Mammary epithelial cell (primary cell): ENCODE measurements at regions of chr15 and their contacts with region 1.

Region 1: DNA sequence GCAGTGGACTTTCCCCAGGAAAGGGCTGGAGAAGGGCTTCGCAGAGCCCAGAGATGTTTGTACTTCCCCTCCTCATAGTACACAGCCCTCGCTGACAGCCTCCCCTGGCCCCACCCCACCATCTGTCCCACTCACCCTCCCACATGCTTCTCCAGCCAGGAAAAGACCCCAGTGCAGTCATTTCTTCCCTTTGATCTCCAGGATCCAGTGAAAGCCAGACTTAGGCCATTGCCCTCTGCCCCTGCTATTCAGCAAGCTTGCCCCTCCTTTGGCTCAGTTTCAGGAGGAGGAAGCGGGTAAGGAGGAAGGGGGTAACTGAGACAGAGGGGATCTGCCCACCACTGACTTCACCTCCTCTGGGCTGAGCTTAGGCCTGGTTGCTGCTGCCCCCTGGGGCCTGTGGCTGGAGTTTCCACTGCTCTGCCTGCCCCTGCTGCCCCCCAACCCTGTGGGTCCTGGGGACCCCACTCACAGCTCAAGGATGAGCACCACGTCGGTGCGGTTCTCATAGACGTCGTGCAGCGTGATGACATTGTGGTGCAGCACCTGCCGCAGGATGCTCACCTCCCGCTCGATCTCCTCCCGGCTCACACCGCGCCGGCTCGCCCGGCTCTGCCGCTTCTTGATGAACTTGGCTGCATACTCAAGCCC is 63.1 kb downstream of the DAPK2 start:
- DNase-seq: no peak
- H3K4me3 ChIP-seq: no peak overlapping the region
- H3K27ac ChIP-seq: no peak overlapping the region
- H3K4me1 ChIP-seq: peaks cover 12% of the 10 kb centered on the region
- H3K27me3 ChIP-seq: no peaks in the 10 kb centered on the region
- CTCF ChIP-seq: no peak

Region 2: GRCh38 chr15:63079938-63080626 is 903.1 kb before region 1 on chr15:
- CTCF ChIA-PET with region 1: no interaction called
- dilution Hi-C with region 1: no loop called
- in situ Hi-C with region 1: no loop called
- intact Hi-C with region 1: no loop called
- DNase-seq: peak; percentile 53
- H3K4me3 ChIP-seq: no peak overlapping the region
- H3K27ac ChIP-seq: no peak overlapping the region
- H3K4me1 ChIP-seq: peaks cover 12% of the 10 kb centered on the region
- H3K27me3 ChIP-seq: no peaks in the 10 kb centered on the region
- CTCF ChIP-seq: no peak

Region 3: GRCh38 chr15:64004582-64004981 is 21.4 kb after region 1 on chr15:
- CTCF ChIA-PET with region 1: no interaction called
- dilution Hi-C with region 1: no loop called
- in situ Hi-C with region 1: no loop called
- intact Hi-C with region 1: loop called (anchors 2 kb)
- DNase-seq: peak; percentile 96
- H3K4me3 ChIP-seq: no peak overlapping the region
- H3K27ac ChIP-seq: peak overlapping the region; percentile 12
- H3K4me1 ChIP-seq: peaks cover 38% of the 10 kb centered on the region
- H3K27me3 ChIP-seq: no peaks in the 10 kb centered on the region
- CTCF ChIP-seq: no peak

Region 4: GRCh38 chr15:64019764-64020163 is 36.6 kb after region 1 on chr15:
- CTCF ChIA-PET with region 1: no interaction called
- dilution Hi-C with region 1: no loop called
- in situ Hi-C with region 1: no loop called
- intact Hi-C with region 1: loop called (anchors 1 kb)
- DNase-seq: no peak
- H3K4me3 ChIP-seq: no peak overlapping the region
- H3K27ac ChIP-seq: no peak overlapping the region
- H3K4me1 ChIP-seq: peaks cover 28% of the 10 kb centered on the region
- H3K27me3 ChIP-seq: no peaks in the 10 kb centered on the region
- CTCF ChIP-seq: no peak